ENCODE measurements at regions of chr16 and their contacts with region 1.

Region 1: GRCh38 chr16:77722309-77723107 is at the start of gene NUDT7:
- DNase-seq: peak; percentile 100
- ATAC-seq: peak; percentile 97
- H3K4me3 Mint-ChIP-seq: peak within 1 kb of the TSS; percentile 80
- H3K27ac Mint-ChIP-seq: peak within 1 kb of the TSS; percentile 77
- H3K4me1 Mint-ChIP-seq: peaks cover 13% of the 10 kb centered on the region
- H3K27me3 Mint-ChIP-seq: no peaks in the 10 kb centered on the region
- total RNA-seq, gene NUDT7: 9.8 to 11.4 TPM

Region 2: GRCh38 chr16:77211880-77212740 is 510.4 kb before region 1 on chr16:
- CTCF ChIA-PET with region 1: interaction called, 3 read pairs
- POLR2A ChIA-PET with region 1: no interaction called
- intact Hi-C with region 1: loop called in 1 of 2 experiments (anchors 1 kb)
- DNase-seq: peak; percentile 88
- ATAC-seq: peak; percentile 85
- H3K4me3 Mint-ChIP-seq: peak overlapping the region; percentile 71
- H3K27ac Mint-ChIP-seq: peak overlapping the region; percentile 57
- H3K4me1 Mint-ChIP-seq: peaks cover 13% of the 10 kb centered on the region
- H3K27me3 Mint-ChIP-seq: no peaks in the 10 kb centered on the region

Region 3: DNA sequence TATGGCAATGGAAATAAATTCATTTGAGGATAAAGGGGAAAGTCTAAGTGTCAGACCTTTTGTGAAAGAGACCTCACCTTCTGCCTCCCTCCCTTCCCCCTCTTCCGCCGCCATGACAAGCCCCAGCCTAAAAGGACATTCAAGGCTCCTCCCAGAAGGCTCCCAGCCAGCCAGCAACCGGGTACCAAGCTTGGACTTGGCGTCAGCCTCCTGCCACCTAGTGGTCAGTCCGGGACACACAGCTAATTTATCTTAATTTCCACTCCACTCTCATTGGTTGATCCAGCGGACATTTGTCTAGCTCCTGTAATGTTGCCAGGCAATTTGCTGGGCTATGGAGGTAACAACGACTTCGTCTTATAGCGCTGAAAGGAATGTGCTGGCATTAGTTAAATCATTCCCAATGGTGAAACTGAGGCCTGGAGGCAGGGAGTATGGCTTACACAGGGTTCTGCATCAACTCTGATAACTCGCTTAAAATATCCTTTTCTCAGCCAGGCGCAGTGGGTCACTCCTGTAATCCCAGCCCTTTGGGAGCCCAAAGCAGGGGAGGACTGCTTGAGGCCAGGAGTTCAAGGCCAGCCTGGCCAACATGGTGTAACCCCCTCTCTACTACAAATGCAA is 280.5 kb after region 1 on chr16:
- CTCF ChIA-PET with region 1: no interaction called
- POLR2A ChIA-PET with region 1: no interaction called
- intact Hi-C with region 1: loop called in 1 of 2 experiments (anchors 5 kb)
- DNase-seq: peak; percentile 90
- ATAC-seq: peak; percentile 99
- H3K4me3 Mint-ChIP-seq: no peak overlapping the region
- H3K27ac Mint-ChIP-seq: no peak overlapping the region
- H3K4me1 Mint-ChIP-seq: no peaks in the 10 kb centered on the region
- H3K27me3 Mint-ChIP-seq: peaks cover 16% of the 10 kb centered on the region

Measured in activated CD4-positive, alpha-beta T cell treated with anti-CD3 and anti-CD28 coated beads for 36 hours (primary cell).